ENCODE measurements at regions of chr16 and their contacts with region 1.

Region 1: DNA sequence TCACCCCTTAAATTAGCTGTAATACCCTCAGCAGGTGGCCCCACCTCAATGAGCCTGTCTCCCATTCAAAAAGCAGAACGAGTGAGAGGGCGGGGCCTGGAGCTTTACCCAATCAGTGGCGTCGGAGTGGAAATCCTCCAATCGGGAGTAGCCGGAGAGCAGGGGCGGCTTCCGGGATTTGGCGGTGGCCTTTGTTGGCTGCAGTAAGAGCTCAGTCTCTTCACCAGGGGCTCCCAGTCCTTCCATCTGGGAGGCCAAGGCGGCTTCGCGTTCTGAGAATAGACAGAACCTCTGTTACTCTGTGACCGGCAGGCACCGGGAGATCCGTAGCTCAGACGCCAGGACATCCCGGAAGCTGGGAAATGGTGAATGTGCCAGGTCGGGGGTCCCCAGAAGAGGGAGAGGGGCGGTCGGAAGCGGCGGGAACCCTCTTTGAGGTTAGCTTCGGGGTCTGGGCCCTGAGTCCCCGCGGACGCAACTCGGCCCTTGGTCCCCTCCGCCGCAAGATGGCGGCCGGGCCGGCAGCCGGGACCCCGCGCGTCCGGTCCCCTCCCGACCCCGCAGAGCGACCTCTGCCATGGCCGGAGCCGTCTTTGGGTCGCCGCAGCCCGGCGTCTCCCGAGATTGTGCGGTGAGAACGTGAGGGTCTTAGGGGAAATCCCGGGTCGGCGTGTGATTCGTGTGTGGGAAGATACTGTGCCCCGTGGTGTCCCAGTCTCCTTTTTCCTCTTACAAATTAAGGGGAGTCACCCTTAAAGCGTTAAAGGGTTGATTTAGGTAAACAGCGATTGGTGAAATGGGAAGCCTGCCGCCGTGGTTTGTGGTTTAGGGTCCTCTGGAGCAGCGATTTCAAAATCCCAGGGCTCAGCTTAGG is 160.3 kb upstream of the ZNF267 start:
- DNase-seq: peak; percentile 92 to 96
- H3K4me3 ChIP-seq: peak overlapping the region; percentile 75
- H3K27ac ChIP-seq: peak overlapping the region; percentile 85
- H3K4me1 ChIP-seq: peaks cover 16% of the 10 kb centered on the region
- H3K27me3 ChIP-seq: no peaks in the 10 kb centered on the region
- CTCF ChIP-seq: no peak; the same call in 1 of the 2 replicates

Region 2: DNA sequence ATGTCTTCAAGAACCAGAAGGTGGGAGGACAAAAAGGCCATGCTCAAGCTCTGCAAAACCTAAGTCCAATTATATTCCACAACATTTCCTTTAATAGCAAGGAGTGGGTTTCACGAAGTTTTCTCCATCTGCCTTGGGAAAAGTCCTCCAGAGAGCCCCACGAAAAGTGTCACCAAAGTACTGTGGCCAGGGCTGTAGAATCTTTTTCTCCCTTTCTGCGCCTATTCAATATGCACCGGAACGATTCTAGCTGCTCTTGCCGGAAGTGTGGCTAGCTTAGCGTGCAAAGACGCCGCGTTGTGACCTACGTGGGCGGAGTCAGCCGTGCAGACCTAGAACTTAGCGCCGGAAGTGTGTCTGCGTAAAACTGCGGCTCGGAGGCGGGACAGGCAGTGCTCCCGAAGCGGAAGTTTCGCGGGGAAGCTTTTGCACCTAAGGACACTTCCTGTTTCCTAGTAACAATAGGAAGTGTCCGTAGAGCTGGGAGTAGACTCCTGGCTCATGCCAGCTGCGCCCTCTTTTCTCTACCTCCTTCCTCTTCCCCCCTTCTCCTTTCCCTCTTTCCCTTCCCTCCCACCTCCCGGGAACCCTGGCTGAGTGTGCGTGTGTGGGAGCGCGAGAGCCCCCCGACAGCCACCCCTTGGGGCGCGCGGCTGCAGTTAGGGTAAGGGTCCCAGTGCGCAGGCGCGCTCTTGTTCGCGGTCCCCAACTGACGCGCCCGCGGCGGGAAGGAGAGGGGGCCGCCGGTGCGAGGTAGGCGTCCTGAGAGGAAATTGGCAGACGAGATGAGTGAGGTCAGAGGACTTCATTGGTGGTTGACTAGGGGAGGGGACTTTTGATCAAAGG is 639.1 kb before region 1 on chr16 and contains the starts of genes ZNF646 and ZNF668:
- CTCF ChIA-PET with region 1: no interaction called
- POLR2A ChIA-PET with region 1: no interaction called
- intact Hi-C with region 1: no loop called
- DNase-seq: peak; percentile 98 to 99
- H3K4me3 ChIP-seq: peak within 1 kb of the TSS; percentile 89
- H3K27ac ChIP-seq: peak within 1 kb of the TSS; percentile 62
- H3K4me1 ChIP-seq: peaks cover 20% of the 10 kb centered on the region
- H3K27me3 ChIP-seq: no peaks in the 10 kb centered on the region
- CTCF ChIP-seq: no peak
- total RNA-seq, gene ZNF646: 25.4 and 30.7 TPM in 2 replicates
- total RNA-seq, gene ZNF668: 13.2 and 17.4 TPM in 2 replicates

Region 3: DNA sequence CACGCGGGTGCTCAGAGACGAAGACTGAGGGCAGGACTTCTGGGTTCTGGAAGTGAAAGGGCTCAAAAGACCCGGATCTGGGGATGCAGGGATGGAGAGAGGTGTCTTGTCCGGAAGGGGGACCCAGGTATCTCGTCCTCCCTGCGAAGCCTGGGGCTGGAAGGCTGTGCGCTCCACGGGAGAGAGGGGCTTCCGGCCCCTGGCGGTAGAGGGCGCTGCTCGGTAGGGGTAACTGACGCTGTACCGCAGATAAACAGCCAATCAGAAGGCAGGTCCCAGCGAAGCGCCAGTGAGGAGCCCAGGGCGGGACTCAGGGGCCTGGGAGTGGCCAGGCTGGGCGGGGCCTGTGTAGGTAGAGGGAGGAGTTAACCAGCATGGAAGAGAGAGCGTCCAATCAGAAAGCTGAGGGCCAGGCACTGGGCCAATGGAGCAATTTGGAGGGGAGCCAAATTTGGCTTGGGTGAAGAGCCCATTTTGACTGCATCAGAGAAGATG is 240.6 kb before region 1 on chr16:
- CTCF ChIA-PET with region 1: interaction called, 3 read pairs
- POLR2A ChIA-PET with region 1: no interaction called
- intact Hi-C with region 1: loop called (anchors 5 kb)
- DNase-seq: peak; percentile 62 to 95
- H3K4me3 ChIP-seq: peak overlapping the region; percentile 60; the same call in 1 of the 2 replicates
- H3K27ac ChIP-seq: no peak overlapping the region
- H3K4me1 ChIP-seq: peaks cover 13% of the 10 kb centered on the region; the same call in 1 of the 2 replicates
- H3K27me3 ChIP-seq: no peaks in the 10 kb centered on the region
- CTCF ChIP-seq: peak; percentile 71

Region 4: DNA sequence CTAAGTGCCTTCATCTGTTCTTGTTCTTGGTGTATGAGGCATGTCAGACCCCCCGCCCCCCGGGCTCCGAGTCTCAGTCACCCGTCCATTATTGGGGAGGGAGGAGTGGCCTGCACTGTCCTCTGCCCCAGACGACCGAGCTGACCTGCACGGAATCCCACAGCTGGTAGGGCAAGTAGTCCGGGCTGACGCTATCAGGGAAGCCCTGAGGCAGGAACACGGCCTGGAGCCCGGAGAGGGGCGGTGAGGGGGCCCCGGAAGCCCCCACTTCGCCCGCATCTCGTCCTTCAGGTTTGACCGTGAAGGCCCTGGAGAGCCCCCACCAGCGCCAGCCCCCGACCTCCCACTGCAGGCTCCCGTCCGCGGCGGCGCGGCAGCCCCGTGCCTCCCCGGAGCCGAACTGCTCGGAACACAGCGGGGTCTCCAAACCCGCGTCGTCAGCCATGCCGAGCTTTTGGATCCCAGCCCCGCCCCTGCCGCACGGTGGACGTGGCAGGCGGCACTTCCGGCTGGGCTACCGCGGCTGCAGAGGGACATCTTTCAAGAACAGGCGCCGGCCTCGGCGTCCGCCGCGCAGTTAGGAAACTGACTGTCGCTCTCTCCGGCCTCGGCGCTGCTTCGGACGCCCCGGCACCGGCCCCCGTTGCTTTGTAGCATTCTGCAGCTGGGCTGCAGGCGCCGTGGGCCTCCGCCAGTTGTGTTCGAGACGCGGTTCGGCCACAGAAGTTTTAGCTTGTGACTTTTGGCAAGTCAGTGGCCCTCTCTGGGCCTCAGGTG is 205.2 kb before region 1 on chr16 and contains the start of gene RUSF1:
- CTCF ChIA-PET with region 1: no interaction called
- POLR2A ChIA-PET with region 1: interaction called, 3 read pairs
- intact Hi-C with region 1: loop called (anchors 5 kb)
- DNase-seq: peak; percentile 79 to 91
- H3K4me3 ChIP-seq: peak within 1 kb of the TSS; percentile 69
- H3K27ac ChIP-seq: peak within 1 kb of the TSS; percentile 69
- H3K4me1 ChIP-seq: peaks cover 22% of the 10 kb centered on the region
- H3K27me3 ChIP-seq: no peaks in the 10 kb centered on the region; the same call in 1 of the 2 replicates
- CTCF ChIP-seq: no peak
- total RNA-seq, gene RUSF1: 86.7 and 94.7 TPM in 2 replicates

Region 5: GRCh38 chr16:31641279-31641678 is 72.0 kb before region 1 on chr16:
- CTCF ChIA-PET with region 1: no interaction called
- POLR2A ChIA-PET with region 1: interaction called, 13 read pairs
- intact Hi-C with region 1: no loop called
- DNase-seq: no peak
- H3K4me3 ChIP-seq: no peak overlapping the region
- H3K27ac ChIP-seq: no peak overlapping the region
- H3K4me1 ChIP-seq: no peaks in the 10 kb centered on the region
- H3K27me3 ChIP-seq: peaks cover 61% of the 10 kb centered on the region
- CTCF ChIP-seq: no peak

Region 6: GRCh38 chr16:31764103-31764502 is 50.8 kb after region 1 on chr16:
- CTCF ChIA-PET with region 1: no interaction called
- POLR2A ChIA-PET with region 1: no interaction called
- intact Hi-C with region 1: no loop called
- DNase-seq: no peak
- H3K4me3 ChIP-seq: no peak overlapping the region
- H3K27ac ChIP-seq: no peak overlapping the region
- H3K4me1 ChIP-seq: no peaks in the 10 kb centered on the region
- H3K27me3 ChIP-seq: no peaks in the 10 kb centered on the region
- CTCF ChIP-seq: no peak

Region 7: DNA sequence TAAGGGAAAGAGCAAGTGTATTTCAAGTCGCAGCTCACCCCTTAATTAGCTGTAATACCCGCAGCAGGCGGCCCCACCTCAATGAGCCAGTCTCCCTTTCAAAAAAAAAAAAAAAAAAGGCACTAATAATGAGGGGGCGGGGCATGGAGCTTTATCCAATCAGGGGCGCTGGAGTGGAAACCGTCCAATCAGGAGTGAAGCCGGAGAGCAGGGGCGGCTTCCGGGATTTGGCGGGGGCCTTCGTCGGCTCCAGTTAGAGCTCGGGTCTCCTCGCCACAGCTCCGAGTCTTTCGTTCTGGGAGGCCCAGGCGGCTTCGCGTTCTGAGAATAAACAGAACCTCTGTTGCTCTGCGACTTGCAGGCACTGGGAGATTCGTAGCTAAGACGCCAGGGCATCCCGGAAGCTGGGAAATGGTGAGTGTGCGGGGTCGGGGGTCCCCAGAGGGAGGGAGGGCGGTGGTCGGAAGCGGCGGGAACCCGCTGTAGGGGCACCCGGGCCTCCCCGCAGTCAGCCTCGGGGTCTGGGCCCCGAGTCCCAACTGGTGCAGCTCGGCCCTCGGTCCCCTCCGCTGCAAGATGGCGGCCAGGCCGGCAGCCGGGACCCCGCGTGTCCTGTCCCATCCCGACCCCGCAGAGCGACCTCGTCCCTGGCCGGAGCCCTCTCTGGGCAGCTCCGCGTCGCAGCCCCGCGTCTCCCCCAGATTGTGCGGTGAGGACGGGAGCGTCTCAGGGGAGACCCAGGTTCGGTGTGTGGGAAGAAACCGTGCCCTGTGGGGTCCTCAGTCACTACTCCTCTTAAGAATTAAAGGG is 160.5 kb after region 1 on chr16 and contains the start of gene ZNF267:
- CTCF ChIA-PET with region 1: no interaction called
- POLR2A ChIA-PET with region 1: interaction called, 9 read pairs
- intact Hi-C with region 1: loop called (anchors 10 kb)
- DNase-seq: peak; percentile 84 to 95
- H3K4me3 ChIP-seq: peak within 1 kb of the TSS; percentile 85
- H3K27ac ChIP-seq: peak within 1 kb of the TSS; percentile 67
- H3K4me1 ChIP-seq: peaks cover 25% of the 10 kb centered on the region
- H3K27me3 ChIP-seq: no peaks in the 10 kb centered on the region
- CTCF ChIP-seq: no peak
- total RNA-seq, gene ZNF267: 12.4 and 18.4 TPM in 2 replicates

Measured in PC-9 (cell line).